Heart right ventricle (tissue), 16 donors: ENCODE measurements at regions of chr15 and their contacts with region 1.

Region 1: GRCh38 chr15:98647774-98648653 is at the start of gene IGF1R:
- DNase-seq: peak; percentile 85 to 88
- ATAC-seq: peak; percentile 70 to 89 (median 80)
- H3K4me3 ChIP-seq: peak within 1 kb of the TSS; percentile 81 to 93 (median 89)
- H3K27ac ChIP-seq: peak within 1 kb of the TSS; percentile 89 to 95 (median 92)
- H3K4me1 ChIP-seq: peaks cover 0 to 40% (median 25%) of the 10 kb centered on the region in 9 donors
- H3K27me3 ChIP-seq: peaks cover 0 to 77% (median 39%) of the 10 kb centered on the region in 7 donors
- CTCF ChIP-seq: peak in 5 of 9 donors; percentile 4 to 37 (median 29)
- total RNA-seq, gene IGF1R: 32.3 to 88.2 (median 50.0) TPM

Region 2: GRCh38 chr15:98525661-98526001 is 122.4 kb before region 1 on chr15:
- intact Hi-C with region 1: loop called in 2 of 10 experiments (anchors 10 kb)
- DNase-seq: no peak
- ATAC-seq: peak in 1 of 8 donors; percentile 41
- H3K4me3 ChIP-seq: no peak overlapping the region
- H3K27ac ChIP-seq: peak overlapping the region in 1 of 10 donors; percentile 15
- H3K4me1 ChIP-seq: no peaks in the 10 kb centered on the region
- H3K27me3 ChIP-seq: peaks cover 0 to 24% (median 10%) of the 10 kb centered on the region in 7 donors
- CTCF ChIP-seq: no peak

Region 3: DNA sequence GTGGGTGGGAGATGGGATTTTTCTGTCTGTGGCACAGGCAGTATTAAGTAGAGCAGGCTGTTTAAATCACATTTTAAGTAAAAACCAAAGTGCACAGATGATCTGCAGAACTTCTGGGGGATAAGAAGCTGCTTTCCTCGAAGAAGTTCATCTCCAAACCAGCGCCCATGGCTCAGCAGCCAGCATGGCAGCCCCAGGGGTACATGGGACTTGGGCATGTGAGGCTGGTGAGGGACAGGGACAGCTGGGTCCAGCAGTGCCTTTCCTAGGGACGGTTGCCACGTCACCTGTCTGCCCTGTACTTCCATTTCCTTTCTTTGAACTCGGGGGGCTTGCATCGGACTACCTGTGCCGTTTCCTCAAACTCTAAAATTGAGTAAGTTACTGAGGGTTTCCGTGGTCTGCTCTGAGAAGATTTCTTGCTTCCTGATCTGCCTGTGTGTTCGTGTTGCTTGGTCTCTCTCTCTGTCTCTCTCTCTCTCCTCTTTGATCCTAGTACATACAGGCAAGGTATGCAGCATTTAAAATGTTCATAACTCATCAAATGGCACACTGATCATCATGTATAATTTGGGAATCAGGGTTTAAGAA is 67.9 kb after region 1 on chr15:
- intact Hi-C with region 1: no loop called
- DNase-seq: no peak
- ATAC-seq: no peak
- H3K4me3 ChIP-seq: no peak overlapping the region
- H3K27ac ChIP-seq: peak overlapping the region; percentile 60 to 90 (median 86)
- H3K4me1 ChIP-seq: peaks cover 22 to 88% (median 65%) of the 10 kb centered on the region in 9 donors
- H3K27me3 ChIP-seq: no peaks in the 10 kb centered on the region
- CTCF ChIP-seq: no peak

Region 4: DNA sequence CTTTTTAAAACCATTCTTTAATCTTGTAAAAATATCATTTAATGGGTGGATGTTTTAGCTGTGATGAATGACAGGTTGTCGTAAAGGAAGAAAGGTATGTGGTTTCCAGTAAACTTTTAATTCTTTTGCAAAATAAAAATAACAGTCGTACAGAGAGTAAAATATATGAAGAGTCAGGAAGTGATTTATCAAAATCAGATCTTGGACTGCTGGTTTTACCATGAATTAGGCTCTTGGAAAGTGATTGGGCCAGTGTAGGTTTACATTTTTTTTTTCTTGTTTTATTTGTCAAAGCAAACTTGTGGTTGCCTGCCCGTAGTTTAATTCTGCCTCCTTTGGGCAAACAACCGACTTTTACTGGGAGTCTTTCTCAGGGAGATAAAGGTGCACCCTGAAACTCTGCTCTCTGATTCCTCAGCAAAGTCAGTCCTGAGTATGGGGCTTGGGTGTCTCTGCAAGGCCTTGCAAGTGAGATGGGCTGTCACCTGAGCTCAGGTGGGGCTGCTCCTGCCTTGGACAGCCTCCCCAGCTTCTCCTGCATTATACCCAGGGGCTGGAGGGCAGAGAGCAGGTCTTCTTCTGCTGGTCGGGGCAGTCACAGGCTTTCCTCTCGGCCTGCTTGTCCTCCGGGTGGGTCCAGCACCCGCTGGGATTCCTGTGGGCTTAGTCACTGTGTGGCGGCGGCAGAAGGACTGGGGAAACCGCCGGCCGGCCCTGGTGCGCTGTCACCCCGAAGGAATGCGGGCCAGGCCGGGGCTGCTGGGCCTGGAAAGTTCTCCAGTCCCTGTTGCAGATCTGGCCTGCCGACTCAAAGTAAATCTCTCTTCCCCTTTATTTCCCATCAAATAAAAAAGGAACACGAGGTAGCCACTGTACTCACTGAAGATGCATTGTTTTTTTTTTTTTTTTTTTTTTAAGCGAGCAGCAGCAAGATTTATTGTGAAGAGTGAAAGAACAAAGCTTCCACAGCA is 79.4 kb after region 1 on chr15:
- intact Hi-C with region 1: loop called in 3 of 10 experiments (anchors 5 kb)
- DNase-seq: peak; percentile 85
- ATAC-seq: peak; percentile 90 to 97 (median 92)
- H3K4me3 ChIP-seq: peak overlapping the region in 2 of 10 donors; percentile 16 to 23
- H3K27ac ChIP-seq: peak overlapping the region; percentile 67 to 96 (median 88)
- H3K4me1 ChIP-seq: peaks cover 22 to 99% (median 83%) of the 10 kb centered on the region in 9 donors
- H3K27me3 ChIP-seq: no peaks in the 10 kb centered on the region
- CTCF ChIP-seq: no peak

Region 5: DNA sequence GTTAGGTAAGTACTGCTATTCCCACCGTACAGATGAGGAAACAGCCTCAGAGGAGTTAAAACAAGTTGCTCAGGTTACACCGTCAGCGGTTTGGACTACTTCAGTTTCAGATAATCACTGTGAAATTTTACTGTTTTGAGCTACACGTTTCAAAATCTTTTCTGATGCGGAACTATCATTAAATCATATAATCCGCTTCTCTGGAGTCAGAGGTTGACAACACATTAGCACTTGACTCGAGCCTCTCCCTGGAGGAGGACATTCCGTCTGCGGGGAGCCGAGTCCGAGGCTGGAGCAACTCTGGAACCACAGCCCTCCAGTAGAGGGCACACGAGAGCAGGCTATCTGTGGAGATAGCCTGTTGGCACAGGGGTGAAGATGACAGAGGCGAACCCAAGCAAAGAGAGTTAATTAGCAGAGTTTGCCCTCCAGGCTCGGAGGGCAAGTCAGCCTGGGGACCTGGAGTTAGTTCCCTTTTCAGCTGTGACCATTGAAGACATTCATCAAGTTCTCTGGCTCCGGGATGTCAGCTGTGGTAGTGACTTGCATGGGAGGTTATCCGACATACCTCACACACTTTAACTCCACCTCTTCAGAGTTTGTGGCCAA is 131.6 kb after region 1 on chr15:
- intact Hi-C with region 1: loop called in 4 of 10 experiments (anchors 2 to 5 kb)
- DNase-seq: peak; percentile 83 to 84
- ATAC-seq: peak; percentile 80 to 92 (median 90)
- H3K4me3 ChIP-seq: no peak overlapping the region
- H3K27ac ChIP-seq: peak overlapping the region in 7 of 10 donors; percentile 6 to 56 (median 30)
- H3K4me1 ChIP-seq: peaks cover 0 to 51% (median 42%) of the 10 kb centered on the region in 9 donors
- H3K27me3 ChIP-seq: no peaks in the 10 kb centered on the region
- CTCF ChIP-seq: peak; percentile 82 to 97 (median 95)

Region 6: GRCh38 chr15:98904544-98904943 is 256.5 kb after region 1 on chr15:
- intact Hi-C with region 1: loop called in 1 of 10 experiments (anchors 1 kb)
- DNase-seq: no peak
- ATAC-seq: peak in 5 of 8 donors; percentile 21 to 53 (median 39)
- H3K4me3 ChIP-seq: no peak overlapping the region
- H3K27ac ChIP-seq: peak overlapping the region in 1 of 10 donors; percentile 22
- H3K4me1 ChIP-seq: peaks cover 5 to 50% (median 32%) of the 10 kb centered on the region in 9 donors
- H3K27me3 ChIP-seq: no peaks in the 10 kb centered on the region
- CTCF ChIP-seq: peak in 7 of 9 donors; percentile 27 to 64 (median 53)

Region 7: GRCh38 chr15:99068186-99068585 is 420.2 kb after region 1 on chr15:
- intact Hi-C with region 1: loop called in 4 of 10 experiments (anchors 5 to 10 kb)
- DNase-seq: no peak
- ATAC-seq: no peak
- H3K4me3 ChIP-seq: no peak overlapping the region
- H3K27ac ChIP-seq: no peak overlapping the region
- H3K4me1 ChIP-seq: peaks cover 0 to 2% (median 0%) of the 10 kb centered on the region in 9 donors
- H3K27me3 ChIP-seq: no peaks in the 10 kb centered on the region
- CTCF ChIP-seq: no peak